OCI-LY7 (cell line): ENCODE measurements at regions of chr6 and their contacts with region 1.

Region 1: DNA sequence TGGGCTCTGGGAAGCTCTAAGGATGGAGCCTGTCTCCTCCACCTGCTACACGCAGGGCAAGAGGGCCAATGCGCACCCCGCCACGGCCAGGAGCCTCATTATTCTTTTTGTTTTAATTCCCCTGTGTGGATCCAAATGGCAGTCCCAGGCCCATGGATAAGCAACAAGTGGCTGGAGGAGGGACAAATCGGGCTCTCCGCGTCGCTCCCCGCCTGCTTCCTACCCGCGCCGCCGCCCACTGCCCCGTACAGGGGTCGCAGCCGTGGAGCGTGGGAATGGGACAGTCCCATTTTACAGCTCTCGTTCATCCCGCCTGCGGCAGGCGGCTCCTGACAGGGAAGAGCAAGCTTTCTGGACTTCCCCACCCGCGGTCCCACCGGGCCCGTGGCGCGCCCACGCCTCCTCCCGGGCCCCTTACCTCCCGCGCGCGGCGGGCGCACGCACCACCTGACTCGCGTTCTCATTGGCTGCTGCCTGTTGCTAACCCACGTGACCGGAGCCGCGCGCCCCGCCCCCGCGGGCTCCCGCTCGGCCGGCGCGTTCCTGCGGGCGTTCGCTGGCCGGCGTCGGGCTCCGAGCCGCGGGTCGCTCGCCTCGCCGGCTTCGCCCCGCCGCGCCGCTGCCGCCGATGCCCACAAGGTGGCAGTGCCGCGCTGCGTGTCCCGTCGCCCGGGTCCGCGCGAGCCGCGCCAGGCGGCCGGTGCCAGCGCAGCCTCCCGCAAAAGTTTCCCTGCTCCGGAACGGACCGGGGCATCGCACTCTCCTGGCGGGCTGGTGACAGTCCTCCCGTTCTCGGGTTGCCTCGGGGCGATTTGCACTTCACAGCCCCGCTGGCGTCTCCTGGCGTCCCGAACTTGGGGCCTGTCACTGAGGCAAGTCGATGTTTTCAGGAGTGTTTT is 93.3 kb downstream of the CD83 start:
- DNase-seq: peak; percentile 95
- H3K4me3 ChIP-seq: peak overlapping the region; percentile 69
- H3K27ac ChIP-seq: peak overlapping the region; percentile 57
- H3K4me1 ChIP-seq: peaks cover 28% of the 10 kb centered on the region
- CTCF ChIP-seq: peak; percentile 66

Region 2: DNA sequence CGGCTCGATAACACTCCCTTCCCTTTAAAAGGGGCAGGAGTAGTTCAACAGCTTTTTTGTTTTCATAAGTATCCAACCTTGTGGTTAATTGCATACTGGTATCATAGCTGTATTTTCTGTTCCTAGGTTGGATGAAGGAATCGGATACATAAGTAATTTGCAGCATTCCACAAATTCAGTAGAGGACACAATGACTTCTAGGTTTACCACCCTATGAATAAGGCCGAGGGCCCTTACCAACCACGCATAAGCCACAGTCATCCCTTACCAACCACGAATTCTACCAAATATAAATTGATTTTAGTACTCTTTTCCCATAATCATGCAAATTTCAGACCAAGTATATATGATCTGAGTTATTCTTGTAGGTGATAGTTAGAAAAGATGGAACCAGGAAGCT is 432.9 kb before region 1 on chr6:
- CTCF ChIA-PET with region 1: no interaction called
- POLR2A ChIA-PET with region 1: no interaction called
- intact Hi-C with region 1: no loop called
- DNase-seq: no peak
- H3K4me3 ChIP-seq: no peak overlapping the region
- H3K27ac ChIP-seq: no peak overlapping the region
- H3K4me1 ChIP-seq: no peaks in the 10 kb centered on the region
- CTCF ChIP-seq: no peak

Region 3: DNA sequence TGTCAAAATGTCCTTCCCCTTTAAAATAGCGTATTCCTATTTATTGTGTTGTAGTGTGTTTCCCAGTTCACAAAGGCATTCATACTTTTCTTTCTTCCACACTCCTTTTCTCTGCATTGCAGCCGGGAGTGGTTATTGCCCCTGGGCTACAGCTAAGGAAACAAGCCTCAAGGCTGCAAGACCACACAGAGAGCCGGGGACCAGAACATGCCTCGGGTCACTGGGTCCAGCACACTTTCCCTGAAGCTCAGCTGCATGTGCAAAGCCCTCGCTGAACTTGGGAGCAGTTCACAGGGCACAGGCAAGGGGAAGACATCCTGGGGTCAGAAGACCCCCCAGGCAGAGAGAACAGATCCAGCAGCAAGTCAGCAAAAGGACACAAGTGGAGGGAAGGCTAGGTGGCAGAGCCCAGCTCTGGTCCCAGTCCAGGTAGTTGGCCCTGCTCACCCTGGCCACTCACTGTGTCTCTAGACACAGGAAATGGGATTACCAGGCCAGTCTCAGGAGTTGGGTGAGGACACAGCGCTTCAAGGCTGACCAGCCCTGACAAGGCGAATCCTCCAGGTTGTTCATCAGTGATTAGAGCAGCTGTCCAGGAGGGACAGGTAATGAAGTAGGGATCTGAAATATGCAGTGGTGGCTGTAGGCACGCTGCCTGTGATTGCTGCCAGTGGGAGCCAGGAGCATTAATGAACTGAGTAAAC is 24.9 kb after region 1 on chr6:
- CTCF ChIA-PET with region 1: no interaction called
- POLR2A ChIA-PET with region 1: interaction called, 11 read pairs
- intact Hi-C with region 1: loop called (anchors 1 kb)
- DNase-seq: no peak
- H3K4me3 ChIP-seq: no peak overlapping the region
- H3K27ac ChIP-seq: no peak overlapping the region
- H3K4me1 ChIP-seq: peaks cover 65% of the 10 kb centered on the region
- CTCF ChIP-seq: no peak

Region 4: DNA sequence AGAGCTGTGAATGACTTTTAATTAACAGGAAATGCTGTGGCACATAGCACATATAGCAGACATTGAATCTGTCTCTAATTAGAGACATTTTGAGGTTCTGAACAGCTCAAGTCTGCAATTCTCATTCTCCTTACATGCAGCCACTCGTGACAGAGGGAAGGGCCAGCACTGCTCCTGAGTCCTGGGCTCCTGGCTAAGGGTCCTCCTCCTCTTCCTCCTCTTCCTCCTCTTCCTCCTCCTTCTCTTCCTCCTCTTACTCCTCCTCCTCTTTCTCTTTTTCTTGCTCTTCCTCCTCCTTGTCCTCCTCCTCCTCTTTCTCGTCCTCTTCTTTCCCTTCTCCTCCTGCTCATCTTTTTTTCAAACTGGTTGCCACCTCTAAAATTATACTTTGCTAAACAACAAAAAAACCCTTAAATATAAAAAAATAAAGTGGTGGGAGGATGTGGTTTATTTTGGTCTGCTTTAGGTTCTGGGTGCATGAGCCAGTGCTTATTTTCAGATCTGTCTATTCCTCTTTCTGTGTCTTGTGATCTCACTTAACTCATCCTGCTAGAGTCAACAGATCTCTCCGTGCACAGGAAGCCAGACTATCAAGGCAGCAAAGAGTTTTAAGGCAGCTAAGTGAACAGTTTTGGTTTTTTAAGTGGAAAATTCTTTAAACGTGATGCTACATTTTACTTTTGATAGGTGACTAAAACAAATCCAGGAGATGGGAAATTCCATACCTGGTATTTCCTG is 65.9 kb after region 1 on chr6:
- CTCF ChIA-PET with region 1: no interaction called
- POLR2A ChIA-PET with region 1: interaction called, 5 read pairs
- intact Hi-C with region 1: loop called (anchors 1 kb)
- DNase-seq: peak; percentile 89
- H3K4me3 ChIP-seq: peak overlapping the region; percentile 44
- H3K27ac ChIP-seq: peak overlapping the region; percentile 95
- H3K4me1 ChIP-seq: peaks cover 60% of the 10 kb centered on the region
- CTCF ChIP-seq: no peak

Region 5: GRCh38 chr6:14381829-14382677 is 171.1 kb after region 1 on chr6:
- CTCF ChIA-PET with region 1: no interaction called
- POLR2A ChIA-PET with region 1: no interaction called
- intact Hi-C with region 1: loop called (anchors 5 kb)
- DNase-seq: peak; percentile 88
- H3K4me3 ChIP-seq: peak overlapping the region; percentile 28
- H3K27ac ChIP-seq: peak overlapping the region; percentile 74
- H3K4me1 ChIP-seq: peaks cover 57% of the 10 kb centered on the region
- CTCF ChIP-seq: peak; percentile 40

Region 6: GRCh38 chr6:14549304-14549770 is 338.4 kb after region 1 on chr6:
- CTCF ChIA-PET with region 1: no interaction called
- POLR2A ChIA-PET with region 1: interaction called, 3 read pairs
- intact Hi-C with region 1: loop called (anchors 2 kb)
- DNase-seq: peak; percentile 39
- H3K4me3 ChIP-seq: peak overlapping the region; percentile 26
- H3K27ac ChIP-seq: peak overlapping the region; percentile 51
- H3K4me1 ChIP-seq: peaks cover 47% of the 10 kb centered on the region
- CTCF ChIP-seq: no peak

Region 7: DNA sequence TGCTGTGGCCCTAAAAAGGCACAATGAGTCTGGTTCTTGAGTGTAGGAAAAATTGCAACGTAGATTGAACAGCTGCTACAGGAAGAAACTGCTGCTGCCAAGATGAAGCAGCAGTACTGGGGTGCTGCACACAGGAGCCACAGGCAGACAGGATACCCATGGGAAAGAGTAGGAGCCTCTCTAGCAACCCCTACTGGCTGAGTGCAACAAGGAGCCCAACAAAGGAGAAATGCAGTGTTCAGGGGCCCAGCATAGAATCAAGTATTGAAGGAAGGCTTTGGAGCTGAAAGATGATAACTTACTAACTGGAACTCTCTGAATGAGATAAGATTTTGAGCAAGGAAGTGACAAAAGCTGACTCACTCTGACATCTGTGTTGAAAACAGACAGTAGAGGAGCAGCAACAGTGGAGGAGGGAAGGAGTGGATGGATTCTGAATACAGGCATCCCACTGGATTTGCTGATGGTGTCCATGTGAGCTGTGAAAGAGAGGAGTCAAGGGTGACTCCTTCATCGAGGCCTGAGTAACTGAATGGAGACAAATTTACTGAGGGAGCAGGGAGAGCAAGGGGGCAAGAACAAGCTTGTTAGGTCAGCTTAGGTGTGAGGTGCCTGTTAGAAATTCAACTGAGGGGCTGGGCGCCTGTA is 500.3 kb after region 1 on chr6:
- CTCF ChIA-PET with region 1: no interaction called
- POLR2A ChIA-PET with region 1: interaction called, 3 read pairs
- intact Hi-C with region 1: loop called (anchors 5 kb)
- DNase-seq: peak; percentile 79
- H3K4me3 ChIP-seq: no peak overlapping the region
- H3K27ac ChIP-seq: no peak overlapping the region
- H3K4me1 ChIP-seq: peaks cover 7% of the 10 kb centered on the region
- CTCF ChIP-seq: peak; percentile 80